HEK293 (cell line): ENCODE measurements at regions of chr15 and their contacts with region 1.

Region 1: GRCh38 chr15:77093436-77093835 is 22.5 kb upstream of the TSPAN3 start:
- H3K4me3 ChIP-seq: no peak overlapping the region
- H3K27ac ChIP-seq: no peak overlapping the region
- H3K4me1 ChIP-seq: no peaks in the 10 kb centered on the region
- CTCF ChIP-seq: no peak

Region 2: DNA sequence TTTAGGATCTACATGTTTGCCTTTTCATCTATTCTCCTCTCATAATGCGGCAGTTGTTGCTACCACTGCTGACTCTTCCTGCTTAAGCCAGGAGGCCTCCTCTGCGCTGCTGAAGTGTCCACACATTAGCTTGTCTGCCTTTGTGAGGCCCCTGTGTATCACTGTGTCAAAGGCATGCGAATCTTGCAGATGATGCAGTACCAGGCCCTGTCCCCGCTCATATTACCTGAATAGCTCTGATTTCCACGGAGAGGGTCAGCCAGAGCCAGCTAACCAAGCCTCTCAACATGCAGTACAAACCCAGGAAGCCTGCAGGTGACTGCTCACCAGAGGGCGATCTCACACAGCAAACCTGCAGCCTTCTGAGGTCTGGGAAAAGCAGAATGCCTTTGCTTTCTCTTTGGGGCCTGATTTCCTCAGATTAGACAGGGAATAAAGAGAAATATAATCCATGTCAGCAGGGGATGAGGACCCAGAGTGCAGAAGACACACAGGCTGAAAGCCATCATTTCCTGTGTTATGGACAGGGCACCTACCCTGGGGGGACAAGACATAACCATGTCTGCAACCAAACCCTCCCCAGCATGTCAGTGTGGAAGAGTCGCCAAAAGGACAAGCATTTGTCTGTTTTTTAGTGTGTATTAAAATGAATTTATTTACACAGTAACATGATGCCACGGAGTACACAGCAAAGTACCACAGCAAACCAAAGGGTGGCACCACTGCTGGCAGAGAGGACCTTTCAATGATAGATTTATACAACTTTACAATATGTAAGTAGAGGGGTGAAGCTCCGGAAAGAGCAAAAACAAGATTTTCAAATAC is 14.3 kb after region 1 on chr15:
- CTCF ChIA-PET with region 1: interaction called, 14 read pairs
- POLR2A ChIA-PET with region 1: interaction called, 4 read pairs
- H3K4me3 ChIP-seq: no peak overlapping the region
- H3K27ac ChIP-seq: no peak overlapping the region
- H3K4me1 ChIP-seq: no peaks in the 10 kb centered on the region
- CTCF ChIP-seq: peak; percentile 70